Colonic mucosa (tissue), 4 donors: ENCODE measurements at regions of chr1 and their contacts with region 1.

Region 1: GRCh38 chr1:201703621-201704439 is 125.1 kb upstream of the IPO9 start:
- DNase-seq: peak; percentile 85
- H3K4me3 ChIP-seq: no peak overlapping the region
- H3K27ac ChIP-seq: peak overlapping the region; percentile 53
- H3K4me1 ChIP-seq: peaks cover 5% of the 10 kb centered on the region
- H3K27me3 ChIP-seq: no peaks in the 10 kb centered on the region
- CTCF ChIP-seq: peak; percentile 97

Region 2: DNA sequence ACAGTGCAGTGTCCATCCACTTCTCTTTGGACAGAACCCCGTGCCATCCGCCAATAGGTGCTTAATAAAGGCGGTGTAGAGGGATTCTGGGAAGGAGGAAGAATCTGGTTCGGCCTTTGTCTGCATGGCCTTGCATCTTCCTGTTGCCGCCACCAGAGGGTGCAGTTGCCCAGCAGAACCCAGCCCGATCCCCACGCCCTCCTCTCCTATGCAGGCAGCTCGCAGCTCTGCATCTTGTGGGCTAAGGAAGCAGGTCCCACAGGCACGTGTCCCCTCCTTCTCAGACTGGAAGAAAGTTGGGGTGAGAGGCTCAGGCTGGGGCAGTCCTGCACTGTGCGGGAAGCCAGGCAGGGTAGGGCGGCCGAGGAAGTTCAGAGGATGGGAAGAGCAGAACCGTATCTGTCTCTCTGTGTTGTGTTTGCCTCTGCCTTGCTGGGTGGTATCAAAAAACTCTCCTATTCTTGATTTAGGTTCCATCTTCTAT is 144.1 kb before region 1 on chr1:
- intact Hi-C with region 1: loop called (anchors 1 kb)
- DNase-seq: peak; percentile 76
- H3K4me3 ChIP-seq: no peak overlapping the region
- H3K27ac ChIP-seq: no peak overlapping the region
- H3K4me1 ChIP-seq: no peaks in the 10 kb centered on the region
- H3K27me3 ChIP-seq: no peaks in the 10 kb centered on the region
- CTCF ChIP-seq: peak; percentile 80